Activated T-helper 1 cell treated with anti-CD3 and anti-CD28 coated beads, Interleukin-12 subunit alpha, Interleukin-12 subunit beta, Interleukin-2, Interleukin-4 antibody, amounts not matched to agents 30 ng/mL and 10 ng/mL and 1 ng/mL, durations not matched to agents 14 hours and 24 hours and 36 hours (primary cell): ENCODE measurements at regions of chr22 and their contacts with region 1.

Region 1: DNA sequence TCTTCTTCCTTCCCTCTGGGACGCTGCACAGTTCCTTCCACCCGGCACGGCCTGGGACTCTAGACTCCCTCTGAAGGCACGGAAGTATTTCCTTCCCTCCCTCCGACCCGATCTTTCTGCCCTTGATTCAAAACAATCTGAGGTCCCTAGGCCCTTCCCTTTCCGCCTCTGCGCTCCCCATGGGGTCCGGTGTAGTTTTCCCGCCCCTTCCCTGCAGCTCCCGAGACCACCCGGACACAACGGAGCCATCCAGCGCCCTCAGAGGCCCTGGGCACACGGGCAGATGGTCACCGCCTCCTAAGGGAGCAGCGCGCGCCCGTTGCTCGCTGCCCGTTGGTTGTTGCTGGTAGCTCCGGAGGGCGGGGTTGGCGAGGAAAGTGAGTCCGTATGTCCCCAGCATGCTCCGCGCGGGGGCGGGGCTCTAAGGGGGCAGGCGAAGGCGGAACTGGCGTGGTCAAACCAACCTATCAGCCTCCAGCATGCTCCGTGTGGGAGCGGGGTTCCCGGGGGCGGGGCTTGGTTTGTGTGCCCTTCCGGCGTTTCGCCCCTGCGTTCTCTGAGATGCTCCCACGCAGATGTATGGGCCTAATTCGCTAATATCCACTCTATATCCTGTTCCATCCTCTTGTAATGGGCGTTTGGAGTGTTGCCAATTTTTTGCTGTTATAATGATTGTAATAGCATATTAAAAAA is 19.6 kb downstream of the MIF start:
- DNase-seq: peak; percentile 100
- H3K4me3 Mint-ChIP-seq: peak overlapping the region; percentile 95
- H3K27ac Mint-ChIP-seq: peak overlapping the region; percentile 97
- H3K4me1 Mint-ChIP-seq: peaks cover 24% of the 10 kb centered on the region
- H3K27me3 Mint-ChIP-seq: no peaks in the 10 kb centered on the region

Region 2: GRCh38 chr22:23767673-23768548 is 145.9 kb before region 1 on chr22 and contains the start of gene CHCHD10:
- intact Hi-C with region 1: loop called (anchors 5 kb)
- DNase-seq: peak; percentile 77
- H3K4me3 Mint-ChIP-seq: peak within 1 kb of the TSS; percentile 86
- H3K27ac Mint-ChIP-seq: peak within 1 kb of the TSS; percentile 67
- H3K4me1 Mint-ChIP-seq: peaks cover 24% of the 10 kb centered on the region
- H3K27me3 Mint-ChIP-seq: peaks cover 6% of the 10 kb centered on the region
- total RNA-seq, gene CHCHD10: 89.1 and 96.4 TPM in 2 replicates

Region 3: DNA sequence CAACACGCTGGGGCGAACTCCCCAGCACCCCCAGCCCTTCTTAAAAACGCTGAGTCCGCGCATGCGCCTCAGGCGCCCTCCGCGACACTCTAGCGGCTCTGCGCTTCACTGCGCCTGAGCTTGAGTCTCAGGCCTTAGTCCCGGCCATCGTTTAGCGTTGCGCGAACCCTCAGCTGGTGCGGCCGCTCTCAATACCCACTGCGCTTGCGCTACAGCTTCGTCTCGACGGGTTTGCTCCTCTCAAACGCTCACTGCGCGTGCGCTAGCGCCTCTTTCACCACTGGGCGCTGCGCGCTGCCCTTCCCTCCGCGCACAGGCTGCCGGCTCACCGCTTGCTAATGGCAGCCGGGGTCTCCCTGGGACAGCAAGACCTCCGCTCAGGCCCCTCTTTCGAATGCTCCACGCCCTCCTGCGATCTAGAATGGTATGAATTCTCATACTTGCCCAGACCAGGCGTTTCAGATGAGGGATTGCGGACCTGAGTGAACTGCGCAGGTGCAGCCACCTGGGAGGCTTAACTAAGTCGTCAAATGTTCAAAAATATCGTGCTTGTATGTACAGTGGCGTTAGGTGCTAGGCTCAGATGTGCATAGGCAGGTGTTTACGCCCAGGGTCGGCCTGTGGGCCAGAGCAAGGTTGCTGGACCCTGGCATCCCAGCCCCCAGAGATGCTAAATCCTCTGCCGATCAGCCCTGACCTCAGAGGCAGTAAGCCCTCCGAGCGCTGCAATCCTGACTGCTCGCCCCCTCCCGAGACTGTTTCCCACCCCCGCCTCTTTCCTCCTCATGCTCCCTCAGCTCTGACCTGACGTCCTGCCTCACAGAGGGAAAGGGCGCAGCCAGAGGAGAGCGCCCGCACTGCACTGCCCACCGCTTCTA is 56.0 kb before region 1 on chr22 and contains the start of gene SLC2A11:
- intact Hi-C with region 1: loop called (anchors 5 kb)
- DNase-seq: peak; percentile 93
- H3K4me3 Mint-ChIP-seq: peak within 1 kb of the TSS; percentile 88
- H3K27ac Mint-ChIP-seq: peak within 1 kb of the TSS; percentile 75
- H3K4me1 Mint-ChIP-seq: peaks cover 21% of the 10 kb centered on the region
- H3K27me3 Mint-ChIP-seq: peaks cover 4% of the 10 kb centered on the region
- total RNA-seq, gene SLC2A11: 8.3 and 8.4 TPM in 2 replicates

Region 4: GRCh38 chr22:23893943-23894709 is 19.7 kb before region 1 on chr22 and contains the start of gene MIF:
- intact Hi-C with region 1: loop called (anchors 1 kb)
- DNase-seq: peak; percentile 99
- H3K4me3 Mint-ChIP-seq: peak within 1 kb of the TSS; percentile 98
- H3K27ac Mint-ChIP-seq: peak within 1 kb of the TSS; percentile 99
- H3K4me1 Mint-ChIP-seq: peaks cover 22% of the 10 kb centered on the region
- H3K27me3 Mint-ChIP-seq: no peaks in the 10 kb centered on the region
- total RNA-seq, gene MIF: 1,136 and 1,212 TPM in 2 replicates

Region 5: DNA sequence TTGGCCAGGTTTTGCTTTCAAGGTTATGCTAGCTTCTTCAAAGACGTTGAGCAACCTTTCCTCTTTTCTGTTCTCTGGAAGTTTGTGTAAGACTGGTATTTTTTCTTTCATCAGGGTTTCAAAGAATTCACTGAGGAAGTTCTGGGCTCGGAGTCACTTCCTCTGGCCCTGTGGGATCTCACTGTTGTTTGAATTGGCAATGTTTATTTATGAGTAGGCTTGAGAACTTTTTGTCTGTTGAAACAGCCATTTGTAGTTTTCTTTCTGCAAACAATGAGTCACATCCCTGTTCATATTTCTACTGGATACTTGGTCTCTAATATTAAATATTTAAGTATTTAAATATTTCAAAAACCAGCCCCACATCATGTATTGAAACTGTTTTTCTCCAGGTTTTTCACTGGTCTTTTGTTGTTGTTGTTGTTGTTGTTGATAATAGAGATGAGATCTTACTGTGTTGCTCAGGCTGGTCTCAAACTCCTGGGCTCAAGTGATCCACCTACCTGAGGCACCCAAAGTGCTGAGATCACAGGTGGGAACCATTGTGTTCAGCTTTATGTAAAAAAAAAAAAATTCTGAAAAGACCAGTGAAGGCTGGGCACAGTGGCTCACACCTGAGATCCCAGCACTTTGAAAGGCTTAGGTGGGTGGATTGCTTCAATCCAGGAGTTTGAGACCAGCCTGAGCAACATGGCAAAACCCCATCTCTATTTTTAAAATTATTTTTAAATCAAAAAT is 294.4 kb after region 1 on chr22:
- intact Hi-C with region 1: no loop called
- DNase-seq: no peak
- H3K4me3 Mint-ChIP-seq: peak overlapping the region; percentile 41
- H3K27ac Mint-ChIP-seq: peak overlapping the region; percentile 60
- H3K4me1 Mint-ChIP-seq: peaks cover 40% of the 10 kb centered on the region
- H3K27me3 Mint-ChIP-seq: peaks cover 3% of the 10 kb centered on the region

Region 6: DNA sequence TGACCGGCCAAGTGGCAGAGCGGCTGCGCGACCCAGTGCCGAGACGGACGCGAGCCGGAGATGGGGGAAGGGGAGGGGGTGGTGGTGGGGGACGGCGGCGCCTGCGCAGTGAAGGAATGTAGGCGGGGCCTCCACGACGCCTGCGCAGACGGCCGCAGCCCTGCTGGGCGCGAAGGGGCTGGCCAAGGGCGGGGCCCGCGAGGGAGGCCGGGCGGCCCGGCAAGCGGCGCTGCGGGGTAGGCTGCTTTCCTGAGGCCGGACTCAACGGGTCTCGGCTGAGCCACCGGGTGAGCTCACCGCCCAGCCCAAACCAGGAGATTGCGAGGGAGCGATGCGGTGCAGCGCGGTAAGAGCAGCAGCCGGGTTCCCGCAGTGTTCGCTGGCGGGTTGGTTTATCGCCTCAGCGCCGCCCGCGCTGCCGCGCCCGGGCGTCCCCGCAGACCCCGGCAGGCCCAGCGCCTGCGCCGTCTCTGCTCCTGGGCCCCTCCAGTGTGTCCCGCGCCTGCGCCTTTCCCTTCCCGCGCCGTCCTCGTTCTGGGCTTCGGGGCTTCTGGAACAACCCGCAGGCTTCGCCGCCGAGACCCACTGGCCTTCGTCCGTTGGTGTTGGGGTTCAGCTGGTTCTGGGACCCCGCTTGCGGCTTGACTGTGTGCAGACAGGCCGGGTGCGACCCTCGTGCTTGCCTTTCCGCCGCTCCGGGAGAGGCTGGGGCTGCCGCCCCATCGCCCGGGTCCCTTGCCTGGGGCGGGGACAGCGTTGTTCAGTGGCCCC is 357.0 kb after region 1 on chr22 and contains the start of gene SPECC1L:
- intact Hi-C with region 1: loop called (anchors 5 kb)
- DNase-seq: peak; percentile 92
- H3K4me3 Mint-ChIP-seq: peak within 1 kb of the TSS; percentile 85
- H3K27ac Mint-ChIP-seq: peak within 1 kb of the TSS; percentile 82
- H3K4me1 Mint-ChIP-seq: peaks cover 35% of the 10 kb centered on the region
- H3K27me3 Mint-ChIP-seq: no peaks in the 10 kb centered on the region
- total RNA-seq, gene SPECC1L: 40.3 and 40.4 TPM in 2 replicates